CD14-positive monocyte (primary cell): ENCODE measurements at regions of chr9 and their contacts with region 1.

Region 1: DNA sequence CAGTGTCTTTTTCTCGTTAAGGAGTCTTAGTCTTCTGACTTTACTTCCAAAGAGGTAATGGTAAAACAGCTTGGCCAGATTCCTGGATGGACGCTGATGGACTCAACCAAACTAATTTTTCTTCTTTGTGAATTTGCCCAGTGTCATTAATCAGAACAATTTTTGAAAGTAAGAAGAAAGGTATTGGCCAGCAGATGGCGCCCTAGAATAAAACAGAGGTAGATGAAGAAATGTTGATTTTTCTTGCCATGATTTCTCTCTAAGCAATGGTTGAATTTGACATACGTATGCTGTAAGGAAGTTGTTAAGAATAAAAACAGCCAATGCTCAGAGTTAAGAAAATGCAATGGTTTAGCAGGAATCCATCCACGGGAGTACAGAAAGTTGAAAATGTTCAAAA is 500.0 kb downstream of the DIRAS2 start:
- DNase-seq: peak; percentile 39 to 57 (median 50)
- H3K4me3 ChIP-seq: no peak overlapping the region
- H3K4me3 Mint-ChIP-seq: no peak overlapping the region
- H3K27ac ChIP-seq: no peak overlapping the region
- H3K27ac Mint-ChIP-seq: no peak overlapping the region
- H3K4me1 ChIP-seq: no peaks in the 10 kb centered on the region
- H3K4me1 Mint-ChIP-seq: no peaks in the 10 kb centered on the region
- H3K27me3 ChIP-seq: no peaks in the 10 kb centered on the region
- H3K27me3 Mint-ChIP-seq: peaks cover 0 to 3% (median 2%) of the 10 kb centered on the region in 3 donors
- CTCF ChIP-seq: peak; percentile 51

Region 2: GRCh38 chr9:90240541-90240940 is 98.0 kb after region 1 on chr9:
- intact Hi-C with region 1: no loop called
- DNase-seq: no peak
- H3K4me3 ChIP-seq: no peak overlapping the region
- H3K4me3 Mint-ChIP-seq: no peak overlapping the region
- H3K27ac ChIP-seq: no peak overlapping the region
- H3K27ac Mint-ChIP-seq: no peak overlapping the region
- H3K4me1 ChIP-seq: no peaks in the 10 kb centered on the region
- H3K4me1 Mint-ChIP-seq: no peaks in the 10 kb centered on the region
- H3K27me3 ChIP-seq: no peaks in the 10 kb centered on the region
- H3K27me3 Mint-ChIP-seq: peaks cover 2 to 8% (median 4%) of the 10 kb centered on the region in 3 donors
- CTCF ChIP-seq: no peak

Region 3: GRCh38 chr9:90449213-90449925 is 306.8 kb after region 1 on chr9:
- intact Hi-C with region 1: no loop called
- DNase-seq: no peak
- H3K4me3 ChIP-seq: no peak overlapping the region
- H3K4me3 Mint-ChIP-seq: no peak overlapping the region
- H3K27ac ChIP-seq: no peak overlapping the region
- H3K27ac Mint-ChIP-seq: no peak overlapping the region
- H3K4me1 ChIP-seq: no peaks in the 10 kb centered on the region
- H3K4me1 Mint-ChIP-seq: no peaks in the 10 kb centered on the region
- H3K27me3 ChIP-seq: no peaks in the 10 kb centered on the region
- H3K27me3 Mint-ChIP-seq: peaks cover 0 to 9% (median 6%) of the 10 kb centered on the region in 3 donors
- CTCF ChIP-seq: no peak

Region 4: GRCh38 chr9:90870621-90871326 is 728.2 kb after region 1 on chr9:
- intact Hi-C with region 1: loop called (anchors 10 kb)
- DNase-seq: peak; percentile 51 to 86 (median 84)
- H3K4me3 ChIP-seq: no peak overlapping the region
- H3K4me3 Mint-ChIP-seq: no peak overlapping the region
- H3K27ac ChIP-seq: peak overlapping the region; percentile 30 to 83
- H3K27ac Mint-ChIP-seq: peak overlapping the region; percentile 83 to 93 (median 91)
- H3K4me1 ChIP-seq: peaks cover 14 to 15% of the 10 kb centered on the region in 2 donors
- H3K4me1 Mint-ChIP-seq: peaks cover 18% of the 10 kb centered on the region
- H3K27me3 ChIP-seq: no peaks in the 10 kb centered on the region
- H3K27me3 Mint-ChIP-seq: no peaks in the 10 kb centered on the region
- CTCF ChIP-seq: peak; percentile 98